Esophagus squamous epithelium (tissue), 5 donors: ENCODE measurements at regions of chr5 and their contacts with region 1.

Region 1: DNA sequence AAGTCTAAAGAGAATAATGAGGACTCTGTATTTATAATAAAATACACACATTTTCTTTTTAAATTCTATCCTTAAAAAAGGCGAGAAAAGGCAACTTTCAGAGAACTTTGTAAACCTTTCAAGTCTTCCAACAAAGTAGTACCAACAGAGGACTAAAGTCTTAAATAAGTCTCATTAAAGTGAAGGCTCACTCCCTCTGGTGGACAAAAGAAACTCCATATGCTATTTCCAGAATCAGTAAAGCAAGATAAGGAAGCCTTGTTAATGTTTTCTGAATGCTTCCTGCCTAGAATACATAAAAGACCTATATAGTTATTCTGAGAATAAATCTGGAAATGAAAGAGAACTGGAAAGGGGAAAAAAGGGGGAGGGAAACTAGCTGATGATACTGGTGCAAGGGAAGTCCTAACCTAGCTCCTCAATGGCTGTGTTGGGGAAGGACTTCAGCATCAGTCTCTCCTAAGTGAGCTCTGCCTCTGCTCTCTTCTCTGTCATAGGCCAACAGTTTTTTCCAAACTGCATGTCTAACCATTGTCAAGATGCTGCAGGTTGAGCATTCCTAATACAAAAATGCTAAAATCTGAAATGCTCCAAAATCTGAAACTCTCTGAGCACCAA is 7.2 kb downstream of the HMGCS1 start:
- DNase-seq: no peak
- H3K4me3 ChIP-seq: no peak overlapping the region
- H3K27ac ChIP-seq: peak overlapping the region in 1 of 4 donors; percentile 19
- H3K4me1 ChIP-seq: peaks cover 0 to 91% (median 24%) of the 10 kb centered on the region in 3 donors
- H3K27me3 ChIP-seq: no peaks in the 10 kb centered on the region
- CTCF ChIP-seq: peak; percentile 36 to 74 (median 62)
- POLR2A ChIP-seq: no peak

Region 2: GRCh38 chr5:43008369-43009153 is 297.5 kb before region 1 on chr5:
- intact Hi-C with region 1: no loop called
- DNase-seq: peak; percentile 28
- H3K4me3 ChIP-seq: peak overlapping the region; percentile 29 to 70 (median 50)
- H3K27ac ChIP-seq: peak overlapping the region; percentile 74 to 95 (median 92)
- H3K4me1 ChIP-seq: peaks cover 0 to 44% (median 24%) of the 10 kb centered on the region in 3 donors
- H3K27me3 ChIP-seq: peaks cover 0 to 78% (median 4%) of the 10 kb centered on the region in 4 donors
- CTCF ChIP-seq: no peak
- POLR2A ChIP-seq: peak in 2 of 4 donors; percentile 84 to 86

Region 3: GRCh38 chr5:43105369-43106289 is 200.4 kb before region 1 on chr5:
- intact Hi-C with region 1: loop called (anchors 10 kb)
- DNase-seq: peak; percentile 23
- H3K4me3 ChIP-seq: peak overlapping the region; percentile 34 to 64 (median 52)
- H3K27ac ChIP-seq: peak overlapping the region; percentile 4 to 79 (median 73)
- H3K4me1 ChIP-seq: peaks cover 0 to 14% (median 5%) of the 10 kb centered on the region in 3 donors
- H3K27me3 ChIP-seq: no peaks in the 10 kb centered on the region
- CTCF ChIP-seq: peak; percentile 95 to 100 (median 98)
- POLR2A ChIP-seq: no peak

Region 4: GRCh38 chr5:43121565-43122484 is 184.2 kb before region 1 on chr5:
- intact Hi-C with region 1: no loop called
- DNase-seq: no peak
- H3K4me3 ChIP-seq: peak overlapping the region; percentile 70 to 98 (median 92)
- H3K27ac ChIP-seq: peak overlapping the region; percentile 94 to 99 (median 99)
- H3K4me1 ChIP-seq: peaks cover 0 to 50% (median 23%) of the 10 kb centered on the region in 3 donors
- H3K27me3 ChIP-seq: no peaks in the 10 kb centered on the region
- CTCF ChIP-seq: no peak
- POLR2A ChIP-seq: peak in 2 of 4 donors; percentile 64 to 83

Region 5: GRCh38 chr5:43389679-43390329 is 83.7 kb after region 1 on chr5:
- intact Hi-C with region 1: loop called (anchors 10 kb)
- DNase-seq: no peak
- H3K4me3 ChIP-seq: no peak overlapping the region
- H3K27ac ChIP-seq: no peak overlapping the region
- H3K4me1 ChIP-seq: peaks cover 0 to 8% (median 0%) of the 10 kb centered on the region in 3 donors
- H3K27me3 ChIP-seq: no peaks in the 10 kb centered on the region
- CTCF ChIP-seq: peak; percentile 87 to 95 (median 91)
- POLR2A ChIP-seq: no peak

Region 6: GRCh38 chr5:43616535-43616934 is 310.5 kb after region 1 on chr5:
- intact Hi-C with region 1: no loop called
- DNase-seq: no peak
- H3K4me3 ChIP-seq: no peak overlapping the region
- H3K27ac ChIP-seq: no peak overlapping the region
- H3K4me1 ChIP-seq: peaks cover 0 to 21% (median 3%) of the 10 kb centered on the region in 3 donors
- H3K27me3 ChIP-seq: no peaks in the 10 kb centered on the region
- CTCF ChIP-seq: no peak
- POLR2A ChIP-seq: no peak

Region 7: DNA sequence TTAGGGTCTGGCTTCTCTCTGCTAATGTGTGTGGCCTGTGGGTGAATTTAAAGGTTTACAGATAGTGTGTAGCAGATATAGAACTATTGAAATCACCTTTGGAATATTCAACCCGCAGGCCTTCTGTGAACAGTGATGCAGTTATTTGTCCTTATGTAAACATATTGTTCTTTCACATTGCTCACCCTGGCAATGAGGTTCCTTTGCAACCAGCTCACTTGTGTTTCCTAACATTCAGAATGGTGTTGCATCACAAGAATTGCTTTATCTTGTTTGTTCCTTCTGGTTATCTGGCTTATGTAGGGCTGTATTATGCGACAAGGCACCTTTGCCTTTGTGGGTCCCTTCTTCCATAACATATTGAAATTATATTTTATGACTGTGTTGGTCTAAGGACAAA is 667.3 kb after region 1 on chr5:
- intact Hi-C with region 1: no loop called
- DNase-seq: no peak
- H3K4me3 ChIP-seq: no peak overlapping the region
- H3K27ac ChIP-seq: no peak overlapping the region
- H3K4me1 ChIP-seq: no peaks in the 10 kb centered on the region
- H3K27me3 ChIP-seq: no peaks in the 10 kb centered on the region
- CTCF ChIP-seq: no peak
- POLR2A ChIP-seq: no peak